ENCODE measurements at regions of chr2 and their contacts with region 1.

Region 1: GRCh38 chr2:169824373-169825333 is at the start of gene METTL5:
- DNase-seq: peak; percentile 74
- H3K4me3 Mint-ChIP-seq: peak within 1 kb of the TSS; percentile 93
- H3K27ac Mint-ChIP-seq: peak within 1 kb of the TSS; percentile 79
- H3K4me1 Mint-ChIP-seq: peaks cover 50% of the 10 kb centered on the region
- H3K27me3 Mint-ChIP-seq: no peaks in the 10 kb centered on the region
- total RNA-seq, gene METTL5: 88.2 and 95.2 TPM in 2 replicates

Region 2: GRCh38 chr2:169479257-169480078 is 345.2 kb before region 1 on chr2 and contains the start of gene BBS5:
- intact Hi-C with region 1: loop called (anchors 1 kb)
- DNase-seq: peak; percentile 65
- H3K4me3 Mint-ChIP-seq: peak within 1 kb of the TSS; percentile 88
- H3K27ac Mint-ChIP-seq: peak within 1 kb of the TSS; percentile 28
- H3K4me1 Mint-ChIP-seq: peaks cover 12% of the 10 kb centered on the region
- H3K27me3 Mint-ChIP-seq: no peaks in the 10 kb centered on the region
- total RNA-seq, gene BBS5: 3.2 and 3.3 TPM in 2 replicates

Region 3: DNA sequence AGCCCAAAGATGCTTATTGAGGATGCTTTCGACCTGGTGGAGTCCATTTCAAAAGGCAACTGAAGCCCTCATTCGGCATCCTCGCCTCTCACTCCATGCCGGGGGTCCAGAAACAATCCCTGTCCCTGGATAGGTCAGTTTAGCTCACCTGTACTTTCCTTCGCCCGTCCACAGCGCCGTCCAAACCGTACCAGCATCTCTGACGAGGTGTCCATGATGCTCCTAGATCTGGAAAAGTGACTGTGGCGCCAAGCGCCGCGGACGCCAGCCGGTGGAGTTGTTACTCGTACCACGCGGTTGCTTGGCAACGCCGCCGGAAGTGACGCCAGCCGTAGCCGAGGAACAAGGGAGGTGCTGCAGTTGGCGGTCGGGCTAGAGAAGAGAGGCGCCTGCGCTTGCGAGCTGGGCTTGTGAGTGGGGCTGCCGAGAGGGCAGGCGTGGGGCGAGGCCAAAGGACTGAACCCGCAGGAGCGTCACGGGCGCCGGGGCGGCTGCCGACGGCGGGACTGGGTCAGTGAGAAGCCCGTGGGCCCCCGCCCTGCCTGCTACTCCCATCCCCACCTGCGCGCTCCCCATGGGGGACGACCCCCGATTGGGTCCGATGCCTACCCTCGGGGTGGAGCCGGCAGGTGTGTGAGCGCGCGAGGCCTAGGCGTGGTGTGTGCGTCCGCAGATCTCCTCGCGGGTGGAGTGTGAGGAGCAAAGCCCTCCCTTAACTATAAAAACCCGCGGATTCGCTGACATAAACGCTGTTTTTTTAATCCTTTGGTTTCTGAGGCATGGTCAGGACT is 130.3 kb before region 1 on chr2 and contains the starts of genes CFAP210 and PHOSPHO2:
- intact Hi-C with region 1: loop called (anchors 1 kb)
- DNase-seq: peak; percentile 98
- H3K4me3 Mint-ChIP-seq: peak within 1 kb of the TSS; percentile 79
- H3K27ac Mint-ChIP-seq: peak within 1 kb of the TSS; percentile 77
- H3K4me1 Mint-ChIP-seq: peaks cover 15% of the 10 kb centered on the region
- H3K27me3 Mint-ChIP-seq: peaks cover 26% of the 10 kb centered on the region
- total RNA-seq, gene CFAP210: not detected in 2 replicates
- total RNA-seq, gene PHOSPHO2: 3.7 and 4.2 TPM in 2 replicates

Region 4: GRCh38 chr2:169877398-169877797 is 52.7 kb after region 1 on chr2:
- intact Hi-C with region 1: loop called (anchors 2 kb)
- DNase-seq: no peak
- H3K4me3 Mint-ChIP-seq: no peak overlapping the region
- H3K27ac Mint-ChIP-seq: no peak overlapping the region
- H3K4me1 Mint-ChIP-seq: peaks cover 2% of the 10 kb centered on the region
- H3K27me3 Mint-ChIP-seq: no peaks in the 10 kb centered on the region

Region 5: GRCh38 chr2:170928824-170929685 is 1104.4 kb after region 1 on chr2 and contains the start of gene GORASP2:
- intact Hi-C with region 1: loop called (anchors 10 kb)
- DNase-seq: peak; percentile 98
- H3K4me3 Mint-ChIP-seq: peak within 1 kb of the TSS; percentile 92
- H3K27ac Mint-ChIP-seq: peak within 1 kb of the TSS; percentile 94
- H3K4me1 Mint-ChIP-seq: peaks cover 45% of the 10 kb centered on the region
- H3K27me3 Mint-ChIP-seq: no peaks in the 10 kb centered on the region
- total RNA-seq, gene GORASP2: 92.4 and 92.8 TPM in 2 replicates